IMR-90 (cell line): ENCODE measurements at regions of chr6 and their contacts with region 1.

Region 1: DNA sequence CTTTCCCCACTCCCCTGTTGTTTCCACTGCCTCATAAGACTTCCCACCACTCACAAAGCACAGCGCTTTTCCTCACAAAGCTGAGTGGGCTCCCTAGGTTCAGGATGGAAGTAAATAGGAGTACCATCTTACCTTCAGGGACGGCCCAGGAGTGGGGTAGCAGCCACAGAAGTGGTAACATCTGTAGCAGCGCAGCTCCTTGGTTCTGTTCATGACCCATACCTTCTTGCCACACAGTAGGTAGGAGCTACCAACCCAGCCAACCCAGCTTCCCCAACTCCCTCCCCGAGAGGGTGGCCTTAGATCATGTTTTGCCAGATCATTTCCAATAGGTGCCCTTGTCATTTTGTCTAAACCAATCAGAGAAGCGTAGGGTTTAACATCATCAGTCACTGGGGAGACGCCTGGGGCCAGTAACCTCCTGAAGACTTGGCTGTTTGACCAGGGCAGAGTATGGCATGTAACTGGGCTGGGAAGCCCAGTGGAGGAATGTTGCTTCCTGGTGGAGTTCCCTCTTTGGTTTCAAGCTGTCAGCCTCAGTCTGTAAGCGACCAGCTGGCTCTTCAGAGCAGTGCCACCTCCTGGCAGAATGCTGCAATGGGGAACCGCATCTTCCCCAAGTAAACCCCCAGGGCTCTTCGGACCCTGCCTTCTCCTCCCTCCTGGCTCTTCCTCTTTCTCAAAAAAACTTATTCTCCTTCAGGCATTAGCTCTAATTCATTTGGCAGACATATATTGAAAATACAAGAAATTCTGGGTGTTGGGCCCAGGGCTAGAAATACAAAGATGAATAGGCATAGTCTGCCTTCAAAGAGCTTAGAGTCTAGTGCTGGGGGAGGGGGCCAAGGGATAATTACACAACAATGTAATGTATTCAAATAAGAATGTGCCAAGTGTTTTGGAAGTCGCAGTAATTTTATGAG is at the start of gene HLA-DMA:
- DNase-seq: peak; percentile 96
- ATAC-seq: peak; percentile 99
- H3K4me3 ChIP-seq: no peak within 1 kb of the TSS
- H3K27ac ChIP-seq: peak within 1 kb of the TSS; percentile 8; the same call in 1 of the 2 replicates
- H3K4me1 ChIP-seq: peaks cover 3% of the 10 kb centered on the region; the same call in 1 of the 2 replicates
- H3K27me3 ChIP-seq: no peaks in the 10 kb centered on the region
- CTCF ChIP-seq: peak; percentile 75
- POLR2A ChIP-seq: no peak
- RAD21 ChIP-seq: peak; percentile 67
- total RNA-seq, gene HLA-DMA: 1.7 and 2.3 TPM in 2 replicates

Region 2: GRCh38 chr6:32622545-32623401 is 330.3 kb before region 1 on chr6:
- CTCF ChIA-PET with region 1: no interaction called
- POLR2A ChIA-PET with region 1: no interaction called
- dilution Hi-C with region 1: no loop called
- in situ Hi-C with region 1: no loop called
- intact Hi-C with region 1: no loop called
- DNase-seq: peak; percentile 28
- ATAC-seq: peak; percentile 80
- H3K4me3 ChIP-seq: no peak overlapping the region
- H3K27ac ChIP-seq: no peak overlapping the region
- H3K4me1 ChIP-seq: no peaks in the 10 kb centered on the region
- H3K27me3 ChIP-seq: no peaks in the 10 kb centered on the region
- CTCF ChIP-seq: peak; percentile 22; the same call in 1 of the 2 replicates
- POLR2A ChIP-seq: no peak
- RAD21 ChIP-seq: no peak

Region 3: DNA sequence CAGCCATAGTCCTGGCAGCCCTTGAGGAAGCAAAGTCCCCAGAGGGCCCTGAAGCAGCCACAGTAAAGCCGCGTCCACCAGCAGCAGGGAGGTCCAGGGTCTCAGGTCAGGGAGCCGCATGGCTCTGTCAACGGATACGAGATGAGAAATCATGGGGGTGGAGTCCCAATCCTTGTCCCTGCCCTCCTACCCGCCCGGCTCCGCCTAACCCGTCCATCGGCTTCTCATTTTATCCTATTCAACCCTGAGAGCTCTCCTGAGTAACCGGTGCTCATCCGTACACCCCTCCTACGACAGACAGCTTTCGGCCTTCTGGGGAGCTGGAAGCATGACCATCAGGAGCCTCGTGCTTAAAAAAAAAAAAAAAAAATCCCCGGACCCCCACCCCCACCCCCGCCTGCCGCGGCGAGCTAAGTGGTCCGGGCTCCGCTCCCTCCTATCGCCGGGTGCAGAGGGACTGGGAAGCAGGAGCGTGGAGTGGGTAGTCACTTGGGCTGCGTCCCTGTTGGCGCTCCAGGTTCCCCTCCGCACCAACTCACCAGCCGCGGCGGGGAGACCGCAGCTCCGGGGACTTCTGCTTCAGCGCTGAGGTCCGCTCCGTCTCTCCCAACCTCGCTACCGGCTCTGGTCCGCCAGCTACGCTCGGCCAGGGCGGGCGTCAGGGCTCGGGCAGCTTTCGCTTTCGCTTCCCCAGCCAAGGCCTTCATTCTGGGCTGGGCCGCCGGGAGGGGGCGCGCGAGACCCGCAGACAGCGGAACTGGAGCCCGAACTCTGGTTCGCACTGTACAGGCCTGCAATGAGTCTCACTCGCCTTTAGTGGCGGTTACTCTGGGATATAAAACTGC is 114.7 kb before region 1 on chr6 and contains the start of gene TAP2:
- CTCF ChIA-PET with region 1: interaction called, 8 read pairs
- POLR2A ChIA-PET with region 1: no interaction called
- dilution Hi-C with region 1: no loop called
- in situ Hi-C with region 1: no loop called
- intact Hi-C with region 1: loop called (anchors 1 kb)
- DNase-seq: peak; percentile 89
- ATAC-seq: peak; percentile 96
- H3K4me3 ChIP-seq: peak within 1 kb of the TSS; percentile 89
- H3K27ac ChIP-seq: peak within 1 kb of the TSS; percentile 89
- H3K4me1 ChIP-seq: peaks cover 7% of the 10 kb centered on the region
- H3K27me3 ChIP-seq: no peaks in the 10 kb centered on the region
- CTCF ChIP-seq: peak; percentile 98
- POLR2A ChIP-seq: peak; percentile 58; the same call in 1 of the 2 replicates
- RAD21 ChIP-seq: peak; percentile 91
- total RNA-seq, gene TAP2: 6.6 and 8.1 TPM in 2 replicates

Region 4: GRCh38 chr6:32933636-32934085 is 19.4 kb before region 1 on chr6:
- CTCF ChIA-PET with region 1: interaction called, 22 read pairs
- POLR2A ChIA-PET with region 1: no interaction called
- dilution Hi-C with region 1: no loop called
- in situ Hi-C with region 1: no loop called
- intact Hi-C with region 1: loop called (anchors 1 kb)
- DNase-seq: peak; percentile 73
- ATAC-seq: peak; percentile 91
- H3K4me3 ChIP-seq: no peak overlapping the region
- H3K27ac ChIP-seq: no peak overlapping the region
- H3K4me1 ChIP-seq: no peaks in the 10 kb centered on the region
- H3K27me3 ChIP-seq: peaks cover 17% of the 10 kb centered on the region
- CTCF ChIP-seq: peak; percentile 85
- POLR2A ChIP-seq: no peak
- RAD21 ChIP-seq: peak; percentile 80

Region 5: DNA sequence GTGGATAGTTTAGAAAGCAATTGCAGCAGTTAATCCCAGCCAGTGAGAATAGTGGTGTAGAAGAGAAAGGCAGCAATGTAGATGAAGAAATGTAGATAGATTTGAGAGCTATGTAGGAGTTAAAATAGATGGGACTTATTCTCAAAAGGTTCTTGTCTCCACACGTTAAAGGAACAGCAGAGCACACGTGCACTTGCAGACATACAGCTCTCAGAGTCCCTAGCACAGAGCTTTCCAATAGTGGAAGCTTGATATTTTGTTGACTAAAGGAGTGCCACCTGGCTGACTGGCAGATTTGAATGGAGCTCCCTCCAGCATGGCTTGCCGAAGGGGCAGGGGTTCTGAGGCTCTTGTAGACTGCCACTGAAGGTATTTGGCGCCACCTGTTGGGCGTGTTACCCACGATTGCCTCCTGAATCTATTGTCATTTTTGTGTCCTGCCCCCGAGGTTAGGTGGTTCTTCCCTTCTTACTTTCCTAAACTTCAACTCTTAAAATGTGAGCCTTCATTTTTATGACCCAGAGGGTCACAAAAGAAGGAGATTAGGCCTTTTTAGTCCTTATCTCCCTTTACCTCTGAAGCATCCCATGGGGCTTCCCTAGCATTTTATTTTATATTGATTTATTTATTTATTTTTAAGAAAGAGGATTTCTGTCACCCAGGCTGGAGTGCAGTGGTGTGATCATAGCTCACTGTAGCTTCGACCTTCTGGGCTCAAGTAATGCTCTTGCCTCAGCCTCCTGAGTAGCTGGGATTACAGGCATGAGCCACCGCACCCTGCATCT is 31.7 kb after region 1 on chr6:
- CTCF ChIA-PET with region 1: interaction called, 8 read pairs
- POLR2A ChIA-PET with region 1: no interaction called
- dilution Hi-C with region 1: no loop called
- in situ Hi-C with region 1: no loop called
- intact Hi-C with region 1: loop called (anchors 1 kb)
- DNase-seq: peak; percentile 79
- ATAC-seq: peak; percentile 75
- H3K4me3 ChIP-seq: no peak overlapping the region
- H3K27ac ChIP-seq: no peak overlapping the region
- H3K4me1 ChIP-seq: no peaks in the 10 kb centered on the region
- H3K27me3 ChIP-seq: peaks cover 11% of the 10 kb centered on the region
- CTCF ChIP-seq: peak; percentile 93
- POLR2A ChIP-seq: no peak
- RAD21 ChIP-seq: peak; percentile 97